Sciatic nerve (tissue), 2 donors: ENCODE measurements at regions of chr13 and their contacts with region 1.

Region 1: DNA sequence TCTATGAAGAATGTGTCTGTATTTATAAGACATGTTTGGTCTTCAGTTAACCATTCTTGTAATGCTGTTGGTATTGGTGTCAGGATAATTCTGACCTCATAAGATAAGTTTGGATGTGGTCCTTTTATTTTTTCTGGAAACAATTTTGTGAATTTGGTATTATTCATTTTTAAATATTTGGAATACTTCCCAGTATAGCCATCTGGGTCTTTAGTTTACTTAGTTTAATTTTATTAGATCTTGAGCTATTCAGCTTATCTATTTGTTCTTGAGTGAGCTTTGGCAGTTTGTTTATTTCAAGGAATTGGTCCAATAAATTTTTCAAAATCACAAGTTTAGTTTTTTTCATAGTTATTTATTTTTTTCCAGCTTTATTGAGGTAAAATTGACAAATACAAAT is 335.4 kb upstream of the PCDH20 start:
- DNase-seq: no peak
- ATAC-seq: no peak

Region 2: DNA sequence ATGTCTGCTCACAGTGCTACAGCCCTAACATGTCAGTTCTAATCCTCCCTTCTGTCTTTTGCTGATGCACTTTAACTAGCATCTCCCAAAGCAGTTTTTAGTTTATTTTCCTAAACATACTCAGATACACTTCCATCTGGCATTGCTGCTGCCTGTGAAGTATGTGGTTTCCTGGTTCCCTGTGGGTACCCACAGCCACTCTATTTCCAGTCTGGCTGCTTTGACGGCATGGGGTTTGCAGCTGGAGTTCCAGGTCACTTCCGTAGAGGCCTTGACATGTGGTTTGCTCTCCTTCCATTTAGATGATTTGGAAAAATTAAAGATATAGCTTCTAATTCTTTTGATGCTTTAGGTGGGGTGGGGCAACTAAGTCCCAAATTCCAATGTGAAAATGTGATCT is 710.9 kb before region 1 on chr13:
- intact Hi-C with region 1: loop called (anchors 5 kb)
- DNase-seq: no peak
- ATAC-seq: no peak

Region 3: GRCh38 chr13:61672756-61673155 is 78.3 kb before region 1 on chr13:
- intact Hi-C with region 1: no loop called
- DNase-seq: no peak
- ATAC-seq: no peak